ENCODE measurements at regions of chr14 and their contacts with region 1.

Region 1: DNA sequence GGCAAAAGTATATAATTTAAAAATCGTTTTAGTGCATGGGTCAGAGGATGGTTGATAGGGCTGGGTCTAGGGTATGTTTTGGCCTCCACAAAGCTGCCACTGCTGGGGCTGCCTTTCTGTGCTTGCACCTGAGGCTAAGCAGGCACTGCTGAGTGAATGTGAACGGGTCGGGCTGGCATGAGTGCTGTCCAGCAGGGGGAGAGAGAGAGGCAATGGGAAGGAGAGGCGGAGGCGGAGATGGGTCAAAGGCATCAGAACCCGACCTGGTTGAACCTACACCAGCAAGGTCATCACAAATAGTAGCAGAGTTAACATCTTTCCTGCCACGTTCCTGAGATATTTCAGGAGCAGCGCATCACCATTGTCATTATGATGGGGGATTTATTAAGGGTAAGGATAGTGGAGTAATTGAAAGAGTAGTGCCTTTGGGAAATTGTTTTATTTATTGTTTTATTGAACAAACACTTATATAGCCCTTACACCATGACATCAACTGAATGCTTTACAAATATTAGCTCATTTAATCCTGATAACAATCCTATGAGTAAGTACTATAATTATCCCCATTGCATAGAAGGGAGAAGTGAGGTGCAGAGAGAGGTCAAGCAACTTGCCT is 5.8 kb upstream of the NRXN3 start:
- DNase-seq: peak; percentile 12
- ATAC-seq: peak; percentile 95
- H3K4me3 ChIP-seq: no peak overlapping the region
- H3K27ac ChIP-seq: no peak overlapping the region
- H3K4me1 ChIP-seq: no peaks in the 10 kb centered on the region
- H3K27me3 ChIP-seq: peaks cover 45% of the 10 kb centered on the region
- CTCF ChIP-seq: peak; percentile 18 to 79 (median 73); a peak in 4 of 6 replicates
- POLR2A ChIP-seq: no peak
- RAD21 ChIP-seq: peak; percentile 27; the same call in 1 of the 2 replicates

Region 2: GRCh38 chr14:78598041-78598920 is 433.9 kb after region 1 on chr14:
- CTCF ChIA-PET with region 1: no interaction called
- POLR2A ChIA-PET with region 1: no interaction called
- RAD21 ChIA-PET with region 1: no interaction called
- intact Hi-C with region 1: loop called (anchors 10 kb)
- DNase-seq: peak; percentile 29
- ATAC-seq: peak; percentile 94
- H3K4me3 ChIP-seq: no peak overlapping the region
- H3K27ac ChIP-seq: no peak overlapping the region
- H3K4me1 ChIP-seq: no peaks in the 10 kb centered on the region
- H3K27me3 ChIP-seq: no peaks in the 10 kb centered on the region; the same call in 1 of the 2 replicates
- CTCF ChIP-seq: peak; percentile 46 to 91 (median 90); a peak in 5 of 6 replicates
- POLR2A ChIP-seq: no peak
- RAD21 ChIP-seq: peak; percentile 68